ENCODE measurements at regions of chr15 and their contacts with region 1.

Region 1: DNA sequence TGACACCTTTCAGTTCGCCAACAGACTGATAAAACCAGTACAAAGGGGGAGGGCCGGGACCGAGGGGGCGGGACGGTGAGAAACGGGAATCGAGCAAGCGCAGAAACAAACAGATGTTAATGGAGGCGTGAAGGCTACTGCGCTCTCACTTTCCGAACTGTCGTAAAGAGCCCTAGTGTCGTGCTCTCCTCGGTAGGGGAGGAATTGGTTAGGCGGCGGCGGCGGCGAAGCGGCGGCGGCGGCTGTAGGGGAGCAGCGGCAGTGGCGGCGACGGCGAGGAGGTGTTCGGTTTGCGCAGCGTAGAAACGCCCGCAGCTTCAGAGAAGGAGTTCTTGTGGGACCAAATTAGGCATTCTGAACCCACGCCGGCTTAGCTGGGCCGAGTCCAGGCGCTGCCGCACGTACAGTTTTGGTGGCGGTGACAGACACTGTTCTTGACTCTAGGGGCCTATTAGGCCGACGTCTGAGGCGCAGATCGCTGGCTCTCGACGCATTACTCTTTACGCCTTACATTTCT is at the start of gene RNF111:
- DNase-seq: peak; percentile 96
- H3K4me3 Mint-ChIP-seq: peak within 1 kb of the TSS; percentile 93
- H3K27ac Mint-ChIP-seq: peak within 1 kb of the TSS; percentile 87
- H3K4me1 Mint-ChIP-seq: peaks cover 41% of the 10 kb centered on the region
- H3K27me3 Mint-ChIP-seq: peaks cover 15% of the 10 kb centered on the region
- total RNA-seq, gene RNF111: 32.9 and 35.1 TPM in 2 replicates

Region 2: GRCh38 chr15:58900631-58901030 is 86.9 kb before region 1 on chr15:
- intact Hi-C with region 1: no loop called
- DNase-seq: no peak
- H3K4me3 Mint-ChIP-seq: no peak overlapping the region
- H3K27ac Mint-ChIP-seq: no peak overlapping the region
- H3K4me1 Mint-ChIP-seq: peaks cover 8% of the 10 kb centered on the region
- H3K27me3 Mint-ChIP-seq: no peaks in the 10 kb centered on the region

Region 3: GRCh38 chr15:58933281-58934113 is 54.0 kb before region 1 on chr15 and contains the start of gene SLTM:
- intact Hi-C with region 1: loop called (anchors 1 kb)
- DNase-seq: peak; percentile 96
- H3K4me3 Mint-ChIP-seq: peak within 1 kb of the TSS; percentile 98
- H3K27ac Mint-ChIP-seq: peak within 1 kb of the TSS; percentile 100
- H3K4me1 Mint-ChIP-seq: peaks cover 21% of the 10 kb centered on the region
- H3K27me3 Mint-ChIP-seq: peaks cover 1% of the 10 kb centered on the region
- total RNA-seq, gene SLTM: 126 and 127 TPM in 2 replicates

Region 4: DNA sequence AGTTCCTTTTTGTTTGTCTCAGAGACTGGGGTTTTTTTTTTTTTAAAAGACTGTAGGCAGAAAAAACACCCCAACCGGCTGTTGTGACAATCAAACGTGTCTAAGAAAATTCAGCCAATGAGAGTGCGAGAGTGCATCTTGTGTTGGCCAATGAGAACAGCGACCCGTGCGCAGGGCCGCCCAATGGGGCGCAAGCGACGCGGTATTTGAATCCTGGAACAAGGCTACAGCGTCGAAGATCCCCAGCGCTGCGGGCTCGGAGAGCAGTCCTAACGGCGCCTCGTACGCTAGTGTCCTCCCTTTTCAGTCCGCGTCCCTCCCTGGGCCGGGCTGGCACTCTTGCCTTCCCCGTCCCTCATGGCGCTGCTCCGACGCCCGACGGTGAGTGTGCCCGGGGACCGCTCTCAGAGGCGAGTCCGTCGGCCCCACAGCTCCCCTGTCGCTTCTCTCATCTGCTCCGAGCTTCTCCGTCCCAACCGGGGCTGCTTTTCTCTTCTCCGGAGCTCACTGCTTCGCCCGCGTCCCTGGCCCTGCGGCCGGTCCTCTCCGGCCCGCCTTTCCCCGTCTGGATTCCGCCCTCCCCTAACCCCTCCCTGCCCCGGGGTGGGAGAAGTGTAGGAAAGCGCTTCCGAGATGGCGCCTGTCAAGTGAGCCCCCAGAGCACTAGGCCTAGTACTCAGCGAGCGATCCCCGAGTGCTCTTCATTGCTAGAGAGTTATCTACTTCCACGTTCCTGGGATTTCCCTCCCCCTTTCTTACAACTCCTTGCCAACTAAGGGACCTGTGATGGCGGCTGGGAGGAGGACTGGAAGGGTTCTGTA is 117.6 kb after region 1 on chr15 and contains the start of gene CCNB2:
- intact Hi-C with region 1: loop called (anchors 1 kb)
- DNase-seq: peak; percentile 96
- H3K4me3 Mint-ChIP-seq: peak within 1 kb of the TSS; percentile 85
- H3K27ac Mint-ChIP-seq: peak within 1 kb of the TSS; percentile 98
- H3K4me1 Mint-ChIP-seq: peaks cover 28% of the 10 kb centered on the region
- H3K27me3 Mint-ChIP-seq: no peaks in the 10 kb centered on the region
- total RNA-seq, gene CCNB2: 38.6 and 39.2 TPM in 2 replicates

Region 5: GRCh38 chr15:59247364-59247763 is 259.8 kb after region 1 on chr15:
- intact Hi-C with region 1: loop called (anchors 10 kb)
- DNase-seq: peak; percentile 85
- H3K4me3 Mint-ChIP-seq: no peak overlapping the region
- H3K27ac Mint-ChIP-seq: no peak overlapping the region
- H3K4me1 Mint-ChIP-seq: peaks cover 27% of the 10 kb centered on the region
- H3K27me3 Mint-ChIP-seq: no peaks in the 10 kb centered on the region

Region 6: GRCh38 chr15:59372352-59373211 is 385.0 kb after region 1 on chr15 and contains the start of gene MYO1E:
- intact Hi-C with region 1: loop called (anchors 5 kb)
- DNase-seq: peak; percentile 84
- H3K4me3 Mint-ChIP-seq: peak within 1 kb of the TSS; percentile 98
- H3K27ac Mint-ChIP-seq: peak within 1 kb of the TSS; percentile 80
- H3K4me1 Mint-ChIP-seq: peaks cover 33% of the 10 kb centered on the region
- H3K27me3 Mint-ChIP-seq: peaks cover 37% of the 10 kb centered on the region
- total RNA-seq, gene MYO1E: 34.5 and 45.1 TPM in 2 replicates